ENCODE measurements at regions of chr9 and their contacts with region 1.

Region 1: DNA sequence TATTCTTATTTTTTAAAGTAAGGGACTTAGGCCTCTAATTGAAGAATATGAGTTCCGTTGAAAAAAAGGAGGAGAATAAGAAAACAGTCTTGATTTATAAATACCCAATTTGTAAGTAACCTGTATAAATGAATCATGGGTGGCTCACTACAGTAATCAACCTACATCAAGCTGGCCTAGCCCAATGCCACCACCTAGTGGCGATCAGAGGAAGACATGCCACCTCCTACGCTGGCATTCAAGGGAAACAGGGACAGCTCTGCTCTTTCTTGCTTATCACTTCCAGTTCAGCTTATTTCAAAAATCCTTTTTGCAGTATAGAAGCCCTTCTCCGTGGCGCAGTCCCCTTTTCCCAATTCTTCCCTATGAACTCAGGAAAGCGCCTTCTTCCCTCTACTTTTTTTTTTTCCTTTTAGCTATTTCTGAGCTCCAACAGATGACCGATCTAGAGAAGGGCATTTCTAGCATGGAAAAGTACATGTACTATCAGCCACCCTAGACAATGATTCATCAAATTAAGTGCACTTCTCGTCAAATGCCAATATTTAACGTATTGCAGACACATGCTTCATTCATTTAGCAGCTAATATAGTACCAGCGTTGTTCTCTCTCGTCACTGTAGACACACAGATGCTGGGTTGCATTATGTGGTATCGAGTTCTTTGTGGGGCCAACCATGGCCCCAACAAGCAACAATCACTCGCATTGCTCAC is 28.3 kb downstream of the PTPN3 start:
- DNase-seq: peak; percentile 82
- H3K4me3 Mint-ChIP-seq: no peak overlapping the region
- H3K27ac Mint-ChIP-seq: no peak overlapping the region
- H3K4me1 Mint-ChIP-seq: no peaks in the 10 kb centered on the region
- H3K27me3 Mint-ChIP-seq: peaks cover 11% of the 10 kb centered on the region

Region 2: DNA sequence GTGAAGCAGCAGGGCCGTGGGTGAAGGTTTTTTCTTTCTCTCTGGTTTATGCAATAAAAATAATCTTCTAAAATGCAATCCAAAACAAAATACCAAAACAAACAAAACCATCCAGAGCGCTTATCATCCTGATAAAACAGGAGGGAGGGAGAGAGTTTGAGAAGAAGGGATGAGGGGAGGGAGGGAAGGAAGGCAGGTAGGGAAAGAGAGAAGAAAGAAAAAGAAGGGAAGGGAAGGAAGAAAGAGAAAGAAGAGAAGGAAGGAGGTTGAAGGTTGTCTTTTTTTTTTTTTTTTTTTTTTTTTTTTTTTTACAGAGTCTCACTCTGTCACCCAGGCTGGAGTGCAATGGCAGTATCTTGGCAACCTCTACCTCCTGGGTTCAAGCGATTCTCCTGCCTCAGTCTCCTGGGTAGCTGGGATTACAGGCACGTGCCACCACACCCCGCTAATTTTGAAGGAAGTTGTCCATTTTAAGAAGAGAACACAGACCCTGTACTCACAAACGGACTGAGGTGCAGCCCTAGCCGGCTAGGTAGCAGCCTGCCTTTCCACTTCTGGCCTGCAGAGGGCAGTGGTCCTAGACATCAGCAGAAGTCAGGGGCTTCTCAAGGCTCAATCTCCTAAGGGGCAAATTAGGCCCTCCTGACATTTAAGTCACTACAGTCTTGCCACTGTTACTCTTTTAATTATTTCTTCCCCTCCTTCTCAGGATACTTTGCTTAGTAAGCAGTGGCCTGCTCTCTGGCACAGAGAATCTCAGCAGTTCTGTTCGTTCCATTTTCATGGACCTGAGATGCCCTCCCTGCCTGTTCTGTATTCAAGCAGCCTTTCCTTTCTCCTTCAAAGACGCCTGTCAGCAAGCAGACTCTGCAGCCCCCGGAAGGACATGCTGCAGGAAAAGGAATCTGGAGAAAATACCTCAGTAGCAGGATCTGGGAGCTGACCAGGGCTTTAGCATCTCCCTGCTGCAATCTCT is 225.4 kb before region 1 on chr9:
- CTCF ChIA-PET with region 1: interaction called, 6 read pairs
- POLR2A ChIA-PET with region 1: no interaction called
- intact Hi-C with region 1: loop called (anchors 1 kb)
- DNase-seq: peak; percentile 77
- H3K4me3 Mint-ChIP-seq: no peak overlapping the region
- H3K27ac Mint-ChIP-seq: no peak overlapping the region
- H3K4me1 Mint-ChIP-seq: peaks cover 2% of the 10 kb centered on the region
- H3K27me3 Mint-ChIP-seq: peaks cover 22% of the 10 kb centered on the region

Region 3: GRCh38 chr9:109440797-109441287 is 29.0 kb before region 1 on chr9:
- CTCF ChIA-PET with region 1: interaction called, 73 read pairs
- POLR2A ChIA-PET with region 1: interaction called, 3 read pairs
- intact Hi-C with region 1: loop called (anchors 1 kb)
- DNase-seq: peak; percentile 63
- H3K4me3 Mint-ChIP-seq: no peak overlapping the region
- H3K27ac Mint-ChIP-seq: no peak overlapping the region
- H3K4me1 Mint-ChIP-seq: peaks cover 15% of the 10 kb centered on the region
- H3K27me3 Mint-ChIP-seq: peaks cover 8% of the 10 kb centered on the region

Region 4: DNA sequence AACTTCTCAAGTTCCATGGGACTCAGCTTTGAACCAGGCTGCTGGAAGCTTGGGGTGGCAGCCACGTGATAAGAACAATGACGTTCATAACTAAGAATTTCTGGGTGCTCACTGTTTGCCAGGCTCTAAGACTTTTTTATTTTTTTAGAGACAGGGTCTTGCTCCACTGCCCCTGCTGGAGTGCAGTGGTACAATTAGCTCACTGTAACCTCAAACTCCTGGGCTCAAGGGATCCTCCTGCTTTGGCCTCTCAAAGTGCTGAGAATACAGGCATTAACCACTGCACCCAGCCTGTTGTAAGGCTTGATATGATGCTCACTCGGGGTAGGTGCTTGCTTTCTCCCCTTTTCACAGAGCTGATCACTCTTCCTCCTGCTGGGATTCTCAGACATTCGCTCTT is 10.4 kb before region 1 on chr9:
- CTCF ChIA-PET with region 1: interaction called, 21 read pairs
- POLR2A ChIA-PET with region 1: no interaction called
- intact Hi-C with region 1: no loop called
- DNase-seq: no peak
- H3K4me3 Mint-ChIP-seq: no peak overlapping the region
- H3K27ac Mint-ChIP-seq: no peak overlapping the region
- H3K4me1 Mint-ChIP-seq: peaks cover 2% of the 10 kb centered on the region
- H3K27me3 Mint-ChIP-seq: peaks cover 23% of the 10 kb centered on the region

Region 5: GRCh38 chr9:109520478-109521132 is 50.8 kb after region 1 on chr9:
- CTCF ChIA-PET with region 1: no interaction called
- POLR2A ChIA-PET with region 1: no interaction called
- intact Hi-C with region 1: loop called (anchors 2 kb)
- DNase-seq: peak; percentile 55
- H3K4me3 Mint-ChIP-seq: no peak overlapping the region
- H3K27ac Mint-ChIP-seq: no peak overlapping the region
- H3K4me1 Mint-ChIP-seq: no peaks in the 10 kb centered on the region
- H3K27me3 Mint-ChIP-seq: no peaks in the 10 kb centered on the region

Measured in activated CD4-positive, alpha-beta memory T cell treated with anti-CD3 and anti-CD28 coated beads for 36 hours (primary cell).